Caco-2 (cell line): ENCODE measurements at regions of chr1 and their contacts with region 1.

Region 1: GRCh38 chr1:193346085-193346484 is 159.7 kb upstream of the B3GALT2 start:
- DNase-seq: no peak
- H3K4me3 ChIP-seq: no peak overlapping the region
- H3K4me3 Mint-ChIP-seq: no peak overlapping the region
- H3K27ac Mint-ChIP-seq: no peak overlapping the region
- H3K4me1 ChIP-seq: peaks cover 17% of the 10 kb centered on the region
- H3K4me1 Mint-ChIP-seq: peaks cover 6% of the 10 kb centered on the region
- H3K27me3 ChIP-seq: no peaks in the 10 kb centered on the region
- H3K27me3 Mint-ChIP-seq: no peaks in the 10 kb centered on the region
- CTCF ChIP-seq: no peak

Region 2: GRCh38 chr1:193308438-193308837 is 37.6 kb before region 1 on chr1:
- CTCF ChIA-PET with region 1: no interaction called
- POLR2A ChIA-PET with region 1: no interaction called
- intact Hi-C with region 1: loop called (anchors 2 kb)
- DNase-seq: peak in 1 of 2 experiments; percentile 10
- H3K4me3 ChIP-seq: no peak overlapping the region
- H3K4me3 Mint-ChIP-seq: no peak overlapping the region
- H3K27ac Mint-ChIP-seq: peak overlapping the region; percentile 17
- H3K4me1 ChIP-seq: peaks cover 17% of the 10 kb centered on the region
- H3K4me1 Mint-ChIP-seq: peaks cover 31% of the 10 kb centered on the region
- H3K27me3 ChIP-seq: no peaks in the 10 kb centered on the region
- H3K27me3 Mint-ChIP-seq: no peaks in the 10 kb centered on the region
- CTCF ChIP-seq: no peak